Activated B cell treated with CpG ODN at 0.5 μM for 24 hours (primary cell): ENCODE measurements at regions of chr3 and their contacts with region 1.

Region 1: GRCh38 chr3:53072653-53073552 is 27.0 kb upstream of the SFMBT1 start:
- DNase-seq: peak; percentile 76
- ATAC-seq: peak; percentile 94
- H3K4me3 Mint-ChIP-seq: peak overlapping the region; percentile 92
- H3K27ac Mint-ChIP-seq: peak overlapping the region; percentile 89
- H3K4me1 Mint-ChIP-seq: peaks cover 13% of the 10 kb centered on the region
- H3K27me3 Mint-ChIP-seq: no peaks in the 10 kb centered on the region
- CTCF ChIP-seq: peak; percentile 39

Region 2: DNA sequence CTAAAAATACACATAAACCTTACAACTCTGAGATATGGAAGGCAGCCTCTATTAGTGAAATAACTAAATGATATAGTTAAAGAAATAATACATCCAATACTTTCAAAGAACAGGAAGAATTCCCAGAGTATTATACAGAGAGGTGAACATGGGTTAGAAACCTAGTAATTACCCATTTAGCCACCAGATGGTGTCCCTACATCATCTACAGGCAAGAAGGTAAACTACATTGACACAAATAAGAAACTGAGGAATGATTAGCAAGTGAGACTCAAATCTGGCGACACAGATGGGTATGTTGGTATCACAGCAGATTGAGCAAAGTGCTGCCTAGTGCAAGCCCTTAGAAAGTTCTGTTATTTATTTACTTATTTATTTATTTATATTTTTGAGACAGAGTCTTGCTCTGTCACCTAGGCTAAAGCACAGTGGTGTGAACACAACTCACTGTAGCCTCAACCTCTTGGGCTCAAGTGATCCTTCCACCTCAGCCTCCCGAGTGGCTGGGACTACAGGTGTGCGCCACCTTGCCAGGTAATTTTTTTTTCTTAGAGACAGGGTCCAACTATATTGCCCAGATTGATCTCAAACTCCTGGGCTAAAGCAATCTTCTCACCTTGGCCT is 330.4 kb before region 1 on chr3:
- CTCF ChIA-PET with region 1: interaction called, 3 read pairs
- POLR2A ChIA-PET with region 1: no interaction called
- intact Hi-C with region 1: loop called (anchors 1 kb)
- DNase-seq: no peak
- ATAC-seq: peak; percentile 45
- H3K4me3 Mint-ChIP-seq: no peak overlapping the region
- H3K27ac Mint-ChIP-seq: no peak overlapping the region
- H3K4me1 Mint-ChIP-seq: no peaks in the 10 kb centered on the region
- H3K27me3 Mint-ChIP-seq: no peaks in the 10 kb centered on the region
- CTCF ChIP-seq: peak; percentile 43

Region 3: GRCh38 chr3:52845691-52846431 is 227.0 kb before region 1 on chr3:
- CTCF ChIA-PET with region 1: interaction called, 5 read pairs
- POLR2A ChIA-PET with region 1: no interaction called
- intact Hi-C with region 1: loop called (anchors 1 kb)
- DNase-seq: no peak
- ATAC-seq: peak; percentile 57
- H3K4me3 Mint-ChIP-seq: no peak overlapping the region
- H3K27ac Mint-ChIP-seq: no peak overlapping the region
- H3K4me1 Mint-ChIP-seq: no peaks in the 10 kb centered on the region
- H3K27me3 Mint-ChIP-seq: no peaks in the 10 kb centered on the region
- CTCF ChIP-seq: no peak

Region 4: GRCh38 chr3:52851348-52851747 is 221.6 kb before region 1 on chr3:
- CTCF ChIA-PET with region 1: interaction called, 5 read pairs
- POLR2A ChIA-PET with region 1: no interaction called
- intact Hi-C with region 1: loop called (anchors 1 kb)
- DNase-seq: no peak
- ATAC-seq: peak; percentile 71
- H3K4me3 Mint-ChIP-seq: no peak overlapping the region
- H3K27ac Mint-ChIP-seq: no peak overlapping the region
- H3K4me1 Mint-ChIP-seq: no peaks in the 10 kb centered on the region
- H3K27me3 Mint-ChIP-seq: no peaks in the 10 kb centered on the region
- CTCF ChIP-seq: no peak

Region 5: GRCh38 chr3:52907497-52907896 is 165.4 kb before region 1 on chr3:
- CTCF ChIA-PET with region 1: interaction called, 4 read pairs
- POLR2A ChIA-PET with region 1: no interaction called
- intact Hi-C with region 1: loop called (anchors 1 kb)
- DNase-seq: no peak
- ATAC-seq: no peak
- H3K4me3 Mint-ChIP-seq: no peak overlapping the region
- H3K27ac Mint-ChIP-seq: no peak overlapping the region
- H3K4me1 Mint-ChIP-seq: no peaks in the 10 kb centered on the region
- H3K27me3 Mint-ChIP-seq: no peaks in the 10 kb centered on the region
- CTCF ChIP-seq: no peak

Region 6: DNA sequence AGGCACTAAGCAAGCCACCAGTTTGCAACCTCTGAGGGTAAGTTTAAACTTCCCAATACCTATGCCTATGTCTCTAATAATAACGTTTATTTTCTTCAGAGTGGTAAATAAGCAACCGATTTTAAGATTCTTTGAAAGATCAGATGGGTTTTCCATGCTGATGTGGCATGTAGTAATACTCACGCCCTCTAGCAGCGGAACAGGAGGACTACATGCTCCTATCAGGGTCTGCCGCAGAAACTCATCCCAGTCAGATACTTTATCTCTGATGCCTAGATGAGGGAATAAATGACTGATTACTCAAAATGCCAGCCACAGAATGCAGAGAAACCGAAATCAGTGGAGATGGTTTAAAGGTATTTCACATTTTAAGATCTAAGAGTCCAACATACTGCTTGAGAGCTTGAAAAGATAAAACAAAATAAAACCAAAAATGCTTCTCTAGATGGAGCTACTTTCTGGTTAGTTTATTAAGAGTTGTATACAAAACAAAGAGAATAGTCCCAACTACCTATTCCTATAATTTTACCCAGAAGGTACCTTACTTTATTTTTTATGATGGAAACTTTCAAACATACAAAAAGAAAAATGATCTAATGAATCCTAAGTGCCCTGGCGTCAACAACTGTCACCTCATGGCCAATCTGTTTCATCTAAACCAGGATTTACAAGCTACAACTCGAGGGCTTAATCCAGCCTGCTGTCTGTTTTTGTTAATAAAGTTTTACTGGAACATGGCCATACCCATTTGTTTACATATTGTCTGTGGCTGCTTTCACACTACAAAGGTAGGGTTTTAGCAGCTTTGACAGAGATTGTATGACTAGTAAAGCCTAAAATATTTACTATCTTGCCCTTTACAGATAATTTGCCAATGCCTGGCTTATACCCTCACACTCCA is 138.0 kb before region 1 on chr3:
- CTCF ChIA-PET with region 1: interaction called, 3 read pairs
- POLR2A ChIA-PET with region 1: no interaction called
- intact Hi-C with region 1: loop called (anchors 1 kb)
- DNase-seq: no peak
- ATAC-seq: peak; percentile 87
- H3K4me3 Mint-ChIP-seq: no peak overlapping the region
- H3K27ac Mint-ChIP-seq: peak overlapping the region; percentile 22
- H3K4me1 Mint-ChIP-seq: peaks cover 25% of the 10 kb centered on the region
- H3K27me3 Mint-ChIP-seq: no peaks in the 10 kb centered on the region
- CTCF ChIP-seq: peak; percentile 58